Dendritic cell treated with granulocyte-macrophage colony-stimulating factor and Interleukin-4, amounts not matched to agents 40 ng/mL and 50 ng/mL, for 4 days (primary cell): ENCODE measurements at regions of chr1 and their contacts with region 1.

Region 1: GRCh38 chr1:84781946-84782771 is 91.9 kb upstream of the SSX2IP start:
- H3K4me3 Mint-ChIP-seq: no peak overlapping the region
- H3K27ac Mint-ChIP-seq: no peak overlapping the region
- H3K4me1 Mint-ChIP-seq: peaks cover 19% of the 10 kb centered on the region
- H3K27me3 Mint-ChIP-seq: no peaks in the 10 kb centered on the region

Region 2: DNA sequence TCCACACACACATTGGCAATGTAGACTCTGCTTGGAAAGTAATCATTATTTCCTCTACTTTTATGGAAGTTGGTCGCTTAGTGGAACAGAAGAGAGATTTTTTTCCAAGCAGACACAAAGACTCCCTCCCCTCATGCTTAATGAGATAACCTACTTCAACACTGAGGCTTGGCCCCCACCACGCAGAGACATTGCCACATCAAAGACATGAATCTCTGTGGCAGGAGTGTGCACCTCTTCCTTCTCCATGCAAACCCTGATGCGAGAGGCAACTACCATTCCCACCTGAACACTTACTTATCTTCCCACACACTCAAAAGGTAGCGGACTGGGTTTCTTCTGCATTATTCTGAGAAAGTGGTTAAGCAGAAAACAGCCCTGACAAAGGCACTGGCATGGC is 148.2 kb after region 1 on chr1:
- intact Hi-C with region 1: loop called (anchors 5 kb)
- H3K4me3 Mint-ChIP-seq: no peak overlapping the region
- H3K27ac Mint-ChIP-seq: no peak overlapping the region
- H3K4me1 Mint-ChIP-seq: no peaks in the 10 kb centered on the region
- H3K27me3 Mint-ChIP-seq: peaks cover 2% of the 10 kb centered on the region